H1 (cell line): ENCODE measurements at regions of chr20 and their contacts with region 1.

Region 1: GRCh38 chr20:32484958-32485769 is 100.0 kb downstream of the NOL4L start:
- DNase-seq: peak in 1 of 2 experiments; percentile 70
- H3K4me3 ChIP-seq: peak overlapping the region; percentile 71 to 90 (median 82)
- H3K27ac ChIP-seq: no peak overlapping the region
- H3K4me1 ChIP-seq: peaks cover 11 to 15% (median 13%) of the 10 kb centered on the region in 4 experiments
- H3K27me3 ChIP-seq: no peaks in the 10 kb centered on the region
- CTCF ChIP-seq: peak; percentile 55 to 68 (median 65)
- EP300 ChIP-seq: no peak
- POLR2A ChIP-seq: 0 out of 3 replicates have a peak, but pooled peaks of 1 of the 2 experiments have one; percentile 4
- RAD21 ChIP-seq: peak; percentile 41 to 50; a peak in 3 of 4 replicates

Region 2: GRCh38 chr20:32470025-32470861 is 14.9 kb before region 1 on chr20:
- CTCF ChIA-PET with region 1: interaction called, 16 read pairs
- POLR2A ChIA-PET with region 1: interaction called, 21 read pairs
- DNase-seq: peak in 1 of 2 experiments; percentile 84
- H3K4me3 ChIP-seq: no peak overlapping the region
- H3K27ac ChIP-seq: peak overlapping the region; percentile 41
- H3K4me1 ChIP-seq: peaks cover 4 to 30% (median 21%) of the 10 kb centered on the region in 4 experiments; a peak in 6 of 7 replicates
- H3K27me3 ChIP-seq: no peaks in the 10 kb centered on the region
- CTCF ChIP-seq: peak; percentile 26 to 75 (median 71)
- EP300 ChIP-seq: no peak
- POLR2A ChIP-seq: no peak
- RAD21 ChIP-seq: peak; percentile 46 to 53; a peak in 3 of 4 replicates

Region 3: DNA sequence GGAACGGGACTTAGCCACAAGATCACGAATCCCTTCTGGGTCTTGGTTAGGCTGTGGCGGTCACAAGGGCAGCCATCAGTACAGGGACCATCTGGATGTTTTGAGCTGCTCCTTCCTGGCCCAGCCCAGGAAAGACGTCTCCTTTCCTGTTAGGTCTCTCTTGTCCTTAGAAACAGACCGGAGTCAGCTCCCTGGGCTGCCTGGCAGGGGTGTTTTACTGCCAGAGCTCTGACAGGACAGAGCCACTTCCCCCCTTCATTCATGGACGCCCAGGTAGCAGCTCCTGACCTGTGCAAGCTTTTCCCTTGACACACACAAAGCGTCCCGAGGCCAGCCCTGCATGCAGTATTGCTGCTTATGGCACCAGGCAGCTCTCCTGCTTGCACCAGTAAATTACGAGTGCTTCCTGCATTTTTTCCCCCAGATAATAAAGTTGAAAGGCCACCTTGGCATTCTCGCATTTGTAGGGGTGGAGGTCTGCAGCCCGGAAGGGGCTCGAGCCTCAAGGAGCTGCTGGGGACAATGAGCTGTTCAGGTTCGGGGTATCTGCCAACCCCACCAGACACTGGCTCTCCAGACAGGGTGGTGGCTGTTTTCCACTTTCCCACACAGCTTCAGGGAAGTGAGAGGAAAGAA is 12.5 kb after region 1 on chr20:
- CTCF ChIA-PET with region 1: interaction called, 32 read pairs
- POLR2A ChIA-PET with region 1: interaction called, 9 read pairs
- DNase-seq: no peak
- H3K4me3 ChIP-seq: 0 out of 8 replicates have a peak overlapping the region, but pooled peaks of 1 of the 4 experiments have one; percentile 5
- H3K27ac ChIP-seq: no peak overlapping the region
- H3K4me1 ChIP-seq: peaks cover 0 to 10% (median 10%) of the 10 kb centered on the region in 4 experiments; a peak in 6 of 7 replicates
- H3K27me3 ChIP-seq: no peaks in the 10 kb centered on the region
- CTCF ChIP-seq: no peak
- EP300 ChIP-seq: no peak
- POLR2A ChIP-seq: no peak
- RAD21 ChIP-seq: no peak